Esophagus squamous epithelium (tissue), 5 donors: ENCODE measurements at regions of chr2 and their contacts with region 1.

Region 1: GRCh38 chr2:30026087-30027055 is 105.0 kb upstream of the ALK start:
- DNase-seq: no peak
- H3K4me3 ChIP-seq: no peak overlapping the region
- H3K27ac ChIP-seq: peak overlapping the region in 2 of 4 donors; percentile 8 to 56
- H3K4me1 ChIP-seq: peaks cover 0 to 35% (median 3%) of the 10 kb centered on the region in 3 donors
- H3K27me3 ChIP-seq: peaks cover 0 to 12% (median 0%) of the 10 kb centered on the region in 4 donors
- CTCF ChIP-seq: peak; percentile 14 to 85 (median 65)
- POLR2A ChIP-seq: no peak

Region 2: GRCh38 chr2:29923110-29923721 is 103.2 kb before region 1 on chr2:
- intact Hi-C with region 1: loop called (anchors 5 kb)
- DNase-seq: no peak
- H3K4me3 ChIP-seq: no peak overlapping the region
- H3K27ac ChIP-seq: no peak overlapping the region
- H3K4me1 ChIP-seq: peaks cover 20 to 33% (median 23%) of the 10 kb centered on the region in 3 donors
- H3K27me3 ChIP-seq: peaks cover 0 to 53% (median 9%) of the 10 kb centered on the region in 4 donors
- CTCF ChIP-seq: peak; percentile 81 to 92 (median 90)
- POLR2A ChIP-seq: no peak

Region 3: GRCh38 chr2:30310955-30311354 is 284.6 kb after region 1 on chr2:
- intact Hi-C with region 1: no loop called
- DNase-seq: no peak
- H3K4me3 ChIP-seq: no peak overlapping the region
- H3K27ac ChIP-seq: no peak overlapping the region
- H3K4me1 ChIP-seq: peaks cover 0 to 8% (median 0%) of the 10 kb centered on the region in 3 donors
- H3K27me3 ChIP-seq: no peaks in the 10 kb centered on the region
- CTCF ChIP-seq: no peak
- POLR2A ChIP-seq: no peak